Lower leg skin (tissue), 4 donors: ENCODE measurements at regions of chr22 and their contacts with region 1.

Region 1: GRCh38 chr22:21652010-21652546 is 10.0 kb downstream of the SDF2L1 start:
- DNase-seq: peak; percentile 87 to 97
- H3K4me3 ChIP-seq: peak overlapping the region; percentile 34
- CTCF ChIP-seq: no peak
- POLR2A ChIP-seq: no peak

Region 2: DNA sequence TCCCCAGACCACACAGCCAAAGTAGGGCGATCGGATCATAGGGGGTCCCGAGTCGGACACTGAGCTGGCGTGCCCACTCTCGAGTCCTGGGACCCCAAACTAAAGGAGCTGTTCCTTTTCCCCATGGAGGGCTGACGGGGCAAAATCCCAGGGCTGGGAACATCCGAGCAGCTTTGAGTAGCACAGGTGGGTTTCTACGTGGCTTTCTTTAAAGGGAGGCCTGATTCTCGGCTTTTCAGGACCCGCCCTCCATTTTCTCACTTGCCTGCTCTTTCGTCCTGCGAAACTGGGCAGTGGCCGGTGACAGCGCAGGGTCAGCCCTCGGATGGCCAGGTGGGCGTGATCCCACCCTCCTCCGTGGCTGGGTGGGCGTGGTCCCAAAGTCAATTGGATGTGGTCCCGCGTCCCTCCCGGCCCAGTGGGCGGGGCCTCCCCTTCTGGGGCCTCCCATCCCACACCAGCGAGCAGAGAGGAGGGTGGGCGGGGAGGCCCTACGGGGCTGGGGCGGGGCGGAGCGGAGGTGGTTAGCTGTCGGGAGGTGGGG is 1693.0 kb before region 1 on chr22:
- intact Hi-C with region 1: no loop called
- DNase-seq: peak in 1 of 2 donors; percentile 94
- H3K4me3 ChIP-seq: no peak overlapping the region
- CTCF ChIP-seq: no peak
- POLR2A ChIP-seq: no peak

Region 3: GRCh38 chr22:21626735-21627469 is 25.2 kb before region 1 on chr22:
- intact Hi-C with region 1: loop called (anchors 1 kb)
- DNase-seq: no peak
- H3K4me3 ChIP-seq: no peak overlapping the region
- CTCF ChIP-seq: no peak
- POLR2A ChIP-seq: no peak